CD14-positive monocyte (primary cell): ENCODE measurements at regions of chr17 and their contacts with region 1.

Region 1: GRCh38 chr17:7296189-7296902 is 1.9 kb upstream of the YBX2 start:
- DNase-seq: peak; percentile 71 to 86 (median 79)
- H3K4me3 ChIP-seq: peak overlapping the region in 1 of 3 experiments; percentile 23
- H3K4me3 Mint-ChIP-seq: peak overlapping the region in 1 of 2 donors; percentile 89
- H3K27ac ChIP-seq: no peak overlapping the region
- H3K27ac Mint-ChIP-seq: peak overlapping the region in 2 of 7 donors; percentile 58 to 62
- H3K4me1 ChIP-seq: peaks cover 21 to 32% of the 10 kb centered on the region in 2 donors
- H3K4me1 Mint-ChIP-seq: peaks cover 24% of the 10 kb centered on the region
- H3K27me3 ChIP-seq: peaks cover 35 to 47% of the 10 kb centered on the region in 2 donors
- H3K27me3 Mint-ChIP-seq: peaks cover 57 to 81% (median 68%) of the 10 kb centered on the region in 3 donors
- CTCF ChIP-seq: peak; percentile 97

Region 2: GRCh38 chr17:7045909-7046724 is 250.2 kb before region 1 on chr17:
- intact Hi-C with region 1: loop called (anchors 2 to 5 kb)
- DNase-seq: peak; percentile 67 to 71 (median 70)
- H3K4me3 ChIP-seq: peak overlapping the region; percentile 21 to 65 (median 33)
- H3K4me3 Mint-ChIP-seq: peak overlapping the region; percentile 71 to 92
- H3K27ac ChIP-seq: no peak overlapping the region
- H3K27ac Mint-ChIP-seq: peak overlapping the region in 6 of 7 donors; percentile 26 to 89 (median 66)
- H3K4me1 ChIP-seq: peaks cover 43 to 46% of the 10 kb centered on the region in 2 donors
- H3K4me1 Mint-ChIP-seq: peaks cover 34% of the 10 kb centered on the region
- H3K27me3 ChIP-seq: peaks cover 32 to 45% of the 10 kb centered on the region in 2 donors
- H3K27me3 Mint-ChIP-seq: peaks cover 41 to 51% (median 49%) of the 10 kb centered on the region in 3 donors
- CTCF ChIP-seq: peak; percentile 89

Region 3: GRCh38 chr17:7219812-7220581 is 76.3 kb before region 1 on chr17 and contains the starts of genes ACADVL and DLG4:
- intact Hi-C with region 1: loop called (anchors 5 kb)
- DNase-seq: peak; percentile 74 to 78 (median 78)
- H3K4me3 ChIP-seq: peak within 1 kb of the TSS; percentile 65 to 94 (median 77)
- H3K4me3 Mint-ChIP-seq: peak within 1 kb of the TSS; percentile 96 to 98
- H3K27ac ChIP-seq: peak within 1 kb of the TSS; percentile 50 to 85
- H3K27ac Mint-ChIP-seq: peak within 1 kb of the TSS; percentile 89 to 97 (median 94)
- H3K4me1 ChIP-seq: peaks cover 56 to 65% of the 10 kb centered on the region in 2 donors
- H3K4me1 Mint-ChIP-seq: peaks cover 60% of the 10 kb centered on the region
- H3K27me3 ChIP-seq: no peaks in the 10 kb centered on the region
- H3K27me3 Mint-ChIP-seq: peaks cover 0 to 2% (median 2%) of the 10 kb centered on the region in 3 donors
- CTCF ChIP-seq: no peak
- polyA plus RNA-seq, gene ACADVL: 152 to 1,231 (median 154) TPM
- polyA plus RNA-seq, gene DLG4: 0.37 to 42.6 (median 0.39) TPM

Region 4: DNA sequence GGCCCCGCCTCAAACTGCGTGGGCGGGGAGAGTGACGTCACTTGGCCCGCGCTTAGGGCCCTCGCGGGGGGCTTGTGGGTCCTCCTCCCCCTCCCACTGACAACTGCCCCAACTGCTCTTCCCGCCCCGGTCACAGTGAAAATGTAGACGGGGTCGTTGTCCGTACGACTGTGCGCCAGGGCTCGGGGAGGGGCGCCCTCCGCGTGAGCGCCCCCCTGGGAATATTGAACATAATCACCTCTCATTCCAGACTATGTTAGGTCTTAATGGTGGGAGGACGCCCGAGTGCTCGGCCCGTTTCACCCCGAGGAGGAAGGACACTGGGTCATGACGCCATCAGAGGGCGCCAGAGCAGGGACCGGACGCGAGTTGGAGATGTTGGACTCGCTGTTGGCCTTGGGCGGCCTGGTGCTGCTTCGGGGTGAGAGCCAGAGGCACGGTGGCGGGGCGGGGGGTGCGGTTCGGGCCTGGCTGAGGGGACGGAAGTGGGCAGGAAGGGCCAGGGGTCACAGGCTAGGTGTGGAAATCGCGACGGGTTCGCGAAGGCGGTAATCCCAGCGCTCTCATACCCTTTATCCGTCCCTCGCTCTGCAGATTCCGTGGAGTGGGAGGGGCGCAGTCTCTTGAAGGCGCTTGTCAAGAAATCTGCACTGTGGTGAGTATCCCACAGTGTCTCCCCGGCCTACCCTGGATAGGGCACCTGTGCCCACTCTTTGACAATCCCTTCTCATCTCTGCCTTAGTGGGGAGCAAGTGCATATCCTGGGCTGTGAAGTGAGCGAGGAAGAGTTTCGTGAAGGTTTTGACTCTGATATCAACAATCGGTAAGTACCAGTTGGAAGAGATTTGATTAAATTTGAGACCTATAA is 43.9 kb before region 1 on chr17 and contains the start of gene ELP5:
- intact Hi-C with region 1: no loop called
- DNase-seq: peak; percentile 88 to 96 (median 93)
- H3K4me3 ChIP-seq: peak within 1 kb of the TSS; percentile 73 to 93 (median 87)
- H3K4me3 Mint-ChIP-seq: peak within 1 kb of the TSS; percentile 90 to 95
- H3K27ac ChIP-seq: peak within 1 kb of the TSS; percentile 100
- H3K27ac Mint-ChIP-seq: peak within 1 kb of the TSS; percentile 99 to 100 (median 100)
- H3K4me1 ChIP-seq: peaks cover 31 to 36% of the 10 kb centered on the region in 2 donors
- H3K4me1 Mint-ChIP-seq: peaks cover 34% of the 10 kb centered on the region
- H3K27me3 ChIP-seq: no peaks in the 10 kb centered on the region
- H3K27me3 Mint-ChIP-seq: no peaks in the 10 kb centered on the region
- CTCF ChIP-seq: peak; percentile 28
- polyA plus RNA-seq, gene ELP5: 36.1 to 49.5 (median 44.1) TPM

Region 5: DNA sequence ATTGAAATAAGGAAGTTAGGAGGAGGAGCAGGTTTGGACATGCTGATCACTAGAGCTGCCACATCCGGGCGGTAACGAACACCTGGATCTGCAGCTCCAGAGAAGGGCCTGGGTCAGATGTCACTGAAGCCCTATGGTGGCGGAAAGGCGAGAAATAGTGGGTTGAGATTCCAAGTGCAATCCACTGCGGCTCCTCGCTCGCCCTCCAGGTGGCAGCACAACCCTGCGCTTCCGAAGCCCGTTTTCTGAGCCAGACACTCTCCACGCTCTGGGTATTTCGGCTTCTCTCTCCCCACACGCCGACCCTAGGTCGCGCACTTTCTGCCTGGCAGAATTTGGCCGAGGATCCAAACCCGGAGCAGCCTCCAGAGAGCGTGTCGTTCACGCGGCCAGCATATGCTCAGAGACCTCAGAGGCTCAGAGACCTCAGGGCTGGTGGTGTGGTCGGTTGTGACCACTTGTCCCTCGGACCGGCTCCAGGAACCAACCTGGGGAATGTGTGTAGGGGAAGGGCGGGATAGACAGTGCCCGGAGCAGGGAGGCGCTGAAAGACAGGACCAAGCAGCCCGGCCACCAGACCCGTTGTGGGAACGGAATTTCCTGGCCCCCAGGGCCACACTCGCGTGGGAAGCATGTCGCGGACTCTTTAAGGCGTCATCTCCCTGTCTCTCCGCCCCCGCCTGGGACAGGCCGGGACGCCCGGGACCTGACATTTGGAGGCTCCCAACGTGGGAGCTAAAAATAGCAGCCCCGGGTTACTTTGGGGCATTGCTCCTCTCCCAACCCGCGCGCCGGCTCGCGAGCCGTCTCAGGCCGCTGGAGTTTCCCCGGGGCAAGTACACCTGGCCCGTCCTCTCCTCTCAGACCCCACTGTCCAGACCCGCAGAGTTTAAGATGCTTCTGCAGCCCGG is 15.6 kb before region 1 on chr17:
- intact Hi-C with region 1: loop called in 1 of 2 experiments (anchors 1 kb)
- DNase-seq: peak; percentile 55 to 74 (median 70)
- H3K4me3 ChIP-seq: peak overlapping the region in 2 of 3 experiments; percentile 28 to 72
- H3K4me3 Mint-ChIP-seq: peak overlapping the region; percentile 74 to 88
- H3K27ac ChIP-seq: no peak overlapping the region
- H3K27ac Mint-ChIP-seq: peak overlapping the region in 6 of 7 donors; percentile 28 to 82 (median 54)
- H3K4me1 ChIP-seq: peaks cover 27 to 28% of the 10 kb centered on the region in 2 donors
- H3K4me1 Mint-ChIP-seq: peaks cover 30% of the 10 kb centered on the region
- H3K27me3 ChIP-seq: peaks cover 13 to 46% of the 10 kb centered on the region in 2 donors
- H3K27me3 Mint-ChIP-seq: peaks cover 44 to 65% (median 45%) of the 10 kb centered on the region in 3 donors
- CTCF ChIP-seq: peak; percentile 87

Region 6: GRCh38 chr17:7416323-7416722 is 120.0 kb after region 1 on chr17:
- intact Hi-C with region 1: no loop called
- DNase-seq: no peak
- H3K4me3 ChIP-seq: no peak overlapping the region
- H3K4me3 Mint-ChIP-seq: no peak overlapping the region
- H3K27ac ChIP-seq: no peak overlapping the region
- H3K27ac Mint-ChIP-seq: peak overlapping the region in 1 of 7 donors; percentile 32
- H3K4me1 ChIP-seq: no peaks in the 10 kb centered on the region
- H3K4me1 Mint-ChIP-seq: no peaks in the 10 kb centered on the region
- H3K27me3 ChIP-seq: no peaks in the 10 kb centered on the region
- H3K27me3 Mint-ChIP-seq: peaks cover 1 to 14% (median 7%) of the 10 kb centered on the region in 3 donors
- CTCF ChIP-seq: no peak